ENCODE measurements at regions of chr1 and their contacts with region 1.

Region 1: GRCh38 chr1:48498096-48498791 is 26.2 kb upstream of the SPATA6 start:
- DNase-seq: peak; percentile 66 to 76
- H3K4me3 ChIP-seq: no peak overlapping the region
- H3K4me3 Mint-ChIP-seq: no peak overlapping the region
- H3K27ac Mint-ChIP-seq: no peak overlapping the region
- H3K4me1 ChIP-seq: peaks cover 8% of the 10 kb centered on the region
- H3K4me1 Mint-ChIP-seq: peaks cover 11% of the 10 kb centered on the region
- H3K27me3 ChIP-seq: no peaks in the 10 kb centered on the region
- H3K27me3 Mint-ChIP-seq: no peaks in the 10 kb centered on the region
- CTCF ChIP-seq: peak; percentile 83 to 92

Region 2: GRCh38 chr1:48109390-48110013 is 388.7 kb before region 1 on chr1:
- CTCF ChIA-PET with region 1: no interaction called
- POLR2A ChIA-PET with region 1: no interaction called
- intact Hi-C with region 1: loop called (anchors 10 kb)
- DNase-seq: peak in 1 of 2 experiments; percentile 48
- H3K4me3 ChIP-seq: no peak overlapping the region
- H3K4me3 Mint-ChIP-seq: no peak overlapping the region
- H3K27ac Mint-ChIP-seq: no peak overlapping the region
- H3K4me1 ChIP-seq: no peaks in the 10 kb centered on the region
- H3K4me1 Mint-ChIP-seq: no peaks in the 10 kb centered on the region
- H3K27me3 ChIP-seq: no peaks in the 10 kb centered on the region
- H3K27me3 Mint-ChIP-seq: peaks cover 2% of the 10 kb centered on the region
- CTCF ChIP-seq: peak; percentile 72 to 76

Region 3: GRCh38 chr1:48263041-48263440 is 235.2 kb before region 1 on chr1:
- CTCF ChIA-PET with region 1: no interaction called
- POLR2A ChIA-PET with region 1: no interaction called
- intact Hi-C with region 1: loop called (anchors 10 kb)
- DNase-seq: no peak
- H3K4me3 ChIP-seq: no peak overlapping the region
- H3K4me3 Mint-ChIP-seq: no peak overlapping the region
- H3K27ac Mint-ChIP-seq: no peak overlapping the region
- H3K4me1 ChIP-seq: no peaks in the 10 kb centered on the region
- H3K4me1 Mint-ChIP-seq: no peaks in the 10 kb centered on the region
- H3K27me3 ChIP-seq: no peaks in the 10 kb centered on the region
- H3K27me3 Mint-ChIP-seq: peaks cover 13% of the 10 kb centered on the region
- CTCF ChIP-seq: no peak

Region 4: GRCh38 chr1:48356901-48357300 is 141.3 kb before region 1 on chr1:
- CTCF ChIA-PET with region 1: interaction called, 3 read pairs
- POLR2A ChIA-PET with region 1: no interaction called
- intact Hi-C with region 1: loop called (anchors 1 kb)
- DNase-seq: no peak
- H3K4me3 ChIP-seq: no peak overlapping the region
- H3K4me3 Mint-ChIP-seq: no peak overlapping the region
- H3K27ac Mint-ChIP-seq: no peak overlapping the region
- H3K4me1 ChIP-seq: no peaks in the 10 kb centered on the region
- H3K4me1 Mint-ChIP-seq: no peaks in the 10 kb centered on the region
- H3K27me3 ChIP-seq: no peaks in the 10 kb centered on the region
- H3K27me3 Mint-ChIP-seq: no peaks in the 10 kb centered on the region
- CTCF ChIP-seq: peak in 1 of 2 experiments; percentile 14

Region 5: DNA sequence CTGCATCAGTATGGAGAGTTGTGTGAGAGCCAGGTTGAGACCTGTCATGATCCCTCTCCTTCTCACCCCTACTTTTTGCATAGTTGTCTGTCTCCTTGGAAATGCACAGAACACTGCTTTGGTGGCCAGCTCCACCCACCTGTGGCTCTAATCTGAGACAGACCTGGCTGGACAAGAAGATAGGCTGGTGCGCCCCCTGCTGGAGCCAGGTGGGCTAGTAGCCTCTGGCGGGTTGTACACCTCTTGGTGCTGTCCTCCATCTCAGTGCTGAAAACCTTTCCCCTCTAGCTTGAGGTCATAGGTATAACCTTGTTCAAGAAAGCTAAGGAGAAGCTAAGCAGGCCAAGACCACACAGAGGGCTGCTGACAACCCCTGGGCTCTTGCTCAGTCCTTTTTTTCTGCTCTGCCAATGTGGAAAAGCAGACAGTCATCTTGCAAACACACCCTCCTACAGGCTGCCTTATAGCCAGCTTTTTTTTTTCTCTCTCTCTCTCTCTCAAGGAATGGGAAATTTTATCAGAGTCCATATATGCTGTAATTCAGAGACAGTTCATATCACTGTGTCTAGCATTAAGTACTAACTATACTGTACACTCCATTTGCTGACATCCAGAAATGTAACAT is 32.6 kb after region 1 on chr1:
- CTCF ChIA-PET with region 1: interaction called, 4 read pairs
- POLR2A ChIA-PET with region 1: no interaction called
- intact Hi-C with region 1: loop called (anchors 1 kb)
- DNase-seq: peak; percentile 72 to 78
- H3K4me3 ChIP-seq: no peak overlapping the region
- H3K4me3 Mint-ChIP-seq: no peak overlapping the region
- H3K27ac Mint-ChIP-seq: no peak overlapping the region
- H3K4me1 ChIP-seq: no peaks in the 10 kb centered on the region
- H3K4me1 Mint-ChIP-seq: no peaks in the 10 kb centered on the region
- H3K27me3 ChIP-seq: no peaks in the 10 kb centered on the region
- H3K27me3 Mint-ChIP-seq: peaks cover 15% of the 10 kb centered on the region
- CTCF ChIP-seq: peak; percentile 58 to 78

Region 6: GRCh38 chr1:48619523-48619931 is 121.3 kb after region 1 on chr1:
- CTCF ChIA-PET with region 1: no interaction called
- POLR2A ChIA-PET with region 1: no interaction called
- intact Hi-C with region 1: no loop called
- DNase-seq: peak; percentile 5 to 34
- H3K4me3 ChIP-seq: no peak overlapping the region
- H3K4me3 Mint-ChIP-seq: no peak overlapping the region
- H3K27ac Mint-ChIP-seq: no peak overlapping the region
- H3K4me1 ChIP-seq: no peaks in the 10 kb centered on the region
- H3K4me1 Mint-ChIP-seq: no peaks in the 10 kb centered on the region
- H3K27me3 ChIP-seq: no peaks in the 10 kb centered on the region
- H3K27me3 Mint-ChIP-seq: peaks cover 14% of the 10 kb centered on the region
- CTCF ChIP-seq: no peak